Activated CD4-positive, alpha-beta T cell treated with anti-CD3 and anti-CD28 coated beads, Interleukin-2, amount 10 ng/mL, durations not matched to agents 24 days and 14 days (primary cell): ENCODE measurements at regions of chr15 and their contacts with region 1.

Region 1: GRCh38 chr15:77186594-77187011 is 115.7 kb upstream of the TSPAN3 start:
- DNase-seq: peak; percentile 73
- H3K4me3 Mint-ChIP-seq: no peak overlapping the region
- H3K27ac Mint-ChIP-seq: peak overlapping the region; percentile 48
- H3K4me1 Mint-ChIP-seq: peaks cover 64% of the 10 kb centered on the region
- H3K27me3 Mint-ChIP-seq: no peaks in the 10 kb centered on the region

Region 2: GRCh38 chr15:77034695-77035489 is 151.7 kb before region 1 on chr15:
- intact Hi-C with region 1: no loop called
- DNase-seq: no peak
- H3K4me3 Mint-ChIP-seq: no peak overlapping the region
- H3K27ac Mint-ChIP-seq: peak overlapping the region; percentile 61
- H3K4me1 Mint-ChIP-seq: peaks cover 5% of the 10 kb centered on the region
- H3K27me3 Mint-ChIP-seq: no peaks in the 10 kb centered on the region

Region 3: GRCh38 chr15:77118882-77119321 is 67.7 kb before region 1 on chr15:
- intact Hi-C with region 1: loop called (anchors 5 kb)
- DNase-seq: peak; percentile 82
- H3K4me3 Mint-ChIP-seq: no peak overlapping the region
- H3K27ac Mint-ChIP-seq: no peak overlapping the region
- H3K4me1 Mint-ChIP-seq: peaks cover 14% of the 10 kb centered on the region
- H3K27me3 Mint-ChIP-seq: peaks cover 2% of the 10 kb centered on the region

Region 4: DNA sequence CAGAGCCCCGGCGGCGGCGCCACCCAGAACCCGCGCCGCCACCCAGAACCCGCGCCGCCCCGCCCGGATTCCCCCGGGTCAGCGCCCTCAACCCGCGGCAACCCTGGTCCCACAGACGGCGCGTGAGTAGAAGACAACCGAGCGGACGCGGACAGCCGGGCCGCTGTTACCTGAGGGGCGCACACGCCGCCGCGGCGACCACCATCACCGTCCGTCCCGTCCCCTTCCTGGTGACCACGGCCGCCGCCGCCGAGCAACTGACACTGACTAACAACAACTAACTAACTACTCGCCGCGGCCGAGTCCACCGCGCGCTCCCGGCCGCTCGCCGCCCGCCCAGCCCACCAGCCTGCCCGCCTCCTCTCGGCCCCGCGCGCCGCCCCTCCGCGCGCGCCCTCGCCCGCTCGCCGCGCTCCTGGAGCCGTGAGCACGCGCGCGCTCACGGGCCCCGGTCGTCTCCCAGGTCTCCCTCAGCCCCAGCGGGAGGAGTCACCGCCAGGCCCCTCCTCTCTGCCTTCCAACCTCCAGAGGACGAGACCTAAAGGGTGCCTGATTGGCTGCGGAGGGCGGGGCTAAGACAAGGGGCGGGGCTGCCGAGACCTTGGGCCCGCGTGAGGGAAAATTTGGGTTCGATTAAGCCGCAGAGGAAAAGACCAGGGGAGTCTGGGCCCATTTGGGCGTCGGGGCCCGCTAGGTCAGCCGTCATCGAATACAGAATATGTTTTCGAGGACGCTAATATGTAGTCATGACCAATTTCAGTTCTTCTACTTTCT is 233.4 kb after region 1 on chr15 and contains the start of gene PEAK1:
- intact Hi-C with region 1: loop called (anchors 2 kb)
- DNase-seq: peak; percentile 100
- H3K4me3 Mint-ChIP-seq: peak within 1 kb of the TSS; percentile 96
- H3K27ac Mint-ChIP-seq: peak within 1 kb of the TSS; percentile 94
- H3K4me1 Mint-ChIP-seq: peaks cover 29% of the 10 kb centered on the region
- H3K27me3 Mint-ChIP-seq: no peaks in the 10 kb centered on the region
- total RNA-seq, gene PEAK1: 25.9 and 28.2 TPM in 2 replicates

Region 5: DNA sequence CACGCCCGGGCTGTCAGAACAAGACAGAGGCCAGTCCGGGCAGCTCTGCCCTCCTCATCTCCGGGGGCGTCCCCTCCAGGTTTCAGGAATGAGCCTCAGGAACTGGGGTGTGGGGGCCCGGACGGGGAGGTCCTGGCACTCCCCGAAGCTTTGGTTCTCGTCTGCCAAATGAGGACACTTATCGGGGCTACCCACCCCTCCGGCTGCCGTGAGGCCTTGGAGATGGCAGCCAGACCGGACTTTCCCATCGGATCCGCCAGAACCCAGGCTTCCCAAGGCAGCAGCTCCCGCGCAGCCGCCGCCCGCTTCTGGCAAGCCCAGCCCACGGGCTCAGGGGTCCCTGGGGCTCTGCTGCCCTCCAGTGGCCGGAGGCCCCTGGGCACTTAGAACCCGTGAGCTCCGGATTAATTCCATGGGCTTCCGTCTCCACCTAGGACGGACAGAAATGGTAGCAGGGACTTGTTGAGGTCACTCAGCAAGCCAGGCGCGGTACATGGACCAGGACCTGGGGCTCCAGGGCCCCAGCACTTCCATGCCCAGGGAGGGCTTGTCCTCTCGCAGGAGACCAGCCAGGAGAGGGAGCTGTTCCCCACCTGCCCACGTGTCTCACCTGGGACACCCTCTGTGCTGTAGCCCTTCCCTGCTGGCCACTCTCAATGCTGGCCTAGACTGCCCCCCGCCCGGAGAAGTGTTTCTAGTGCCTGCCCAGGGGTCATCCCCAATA is 356.7 kb after region 1 on chr15:
- intact Hi-C with region 1: loop called (anchors 1 kb)
- DNase-seq: peak; percentile 93
- H3K4me3 Mint-ChIP-seq: peak overlapping the region; percentile 79
- H3K27ac Mint-ChIP-seq: peak overlapping the region; percentile 42
- H3K4me1 Mint-ChIP-seq: peaks cover 9% of the 10 kb centered on the region
- H3K27me3 Mint-ChIP-seq: peaks cover 9% of the 10 kb centered on the region